H1 (cell line): ENCODE measurements at regions of chr9 and their contacts with region 1.

Region 1: DNA sequence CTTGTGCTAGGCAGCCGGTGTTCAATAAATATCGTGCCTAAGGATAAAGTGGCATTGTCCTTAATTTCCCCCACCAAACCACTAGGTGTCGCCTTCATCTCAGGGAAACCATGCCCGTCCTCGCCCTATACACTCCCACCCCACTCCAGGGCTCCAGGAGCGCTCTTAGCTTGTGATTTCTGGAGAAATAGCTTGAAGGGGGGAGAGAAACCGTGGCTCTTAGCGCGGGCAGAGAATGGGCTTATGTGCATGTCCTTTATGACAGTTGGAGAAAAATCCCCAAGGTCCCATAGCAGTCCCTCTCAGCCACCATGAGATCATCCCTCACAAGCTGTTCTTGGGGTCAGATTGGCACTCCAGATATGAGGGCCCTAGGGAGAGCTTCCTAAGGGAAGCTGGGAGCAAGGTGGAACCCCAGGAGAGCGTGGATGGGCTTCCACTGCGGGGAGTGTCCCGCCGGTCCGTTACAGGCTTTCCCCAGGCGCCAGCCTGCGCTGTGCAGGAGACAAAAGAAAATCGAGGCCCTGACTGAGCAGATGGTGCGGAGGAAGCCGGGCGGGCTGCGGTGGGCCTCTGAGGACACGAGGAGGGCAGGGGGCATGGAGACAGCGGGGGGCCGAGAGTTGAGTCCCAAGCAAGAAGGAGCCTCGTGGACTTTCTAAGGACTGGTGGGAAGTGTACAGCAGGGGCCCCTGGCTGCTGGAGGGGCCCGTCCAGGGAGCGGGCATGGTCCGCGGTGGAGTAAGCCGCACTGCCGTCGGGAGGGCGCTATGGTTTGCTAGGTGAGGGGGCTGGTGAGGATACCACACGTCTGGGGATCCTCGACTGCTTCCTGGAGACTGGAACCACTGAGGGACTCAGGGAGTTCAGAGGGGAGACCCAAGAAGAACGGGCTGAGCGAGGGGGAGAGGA is 750 bp upstream of the NPR2 start:
- DNase-seq: peak in 1 of 2 experiments; percentile 78
- H3K4me3 ChIP-seq: peak overlapping the region; percentile 39 to 65 (median 52); a peak in 7 of 8 replicates
- H3K27ac ChIP-seq: no peak overlapping the region
- H3K4me1 ChIP-seq: peaks cover 5 to 13% (median 7%) of the 10 kb centered on the region in 4 experiments; a peak in 6 of 7 replicates
- H3K27me3 ChIP-seq: peaks cover 0 to 10% (median 0%) of the 10 kb centered on the region in 4 experiments; a peak in 4 of 7 replicates
- CTCF ChIP-seq: peak; percentile 79 to 92 (median 90)
- EP300 ChIP-seq: no peak
- POLR2A ChIP-seq: no peak
- RAD21 ChIP-seq: peak; percentile 94

Region 2: GRCh38 chr9:35756275-35757225 is 34.1 kb before region 1 on chr9:
- CTCF ChIA-PET with region 1: interaction called, 10 read pairs
- POLR2A ChIA-PET with region 1: interaction called, 3 read pairs
- DNase-seq: peak; percentile 38 to 87
- H3K4me3 ChIP-seq: peak overlapping the region; percentile 85 to 92 (median 90)
- H3K27ac ChIP-seq: peak overlapping the region; percentile 81
- H3K4me1 ChIP-seq: peaks cover 0 to 5% (median 0%) of the 10 kb centered on the region in 4 experiments; a peak in 2 of 7 replicates
- H3K27me3 ChIP-seq: no peaks in the 10 kb centered on the region
- CTCF ChIP-seq: peak; percentile 56 to 79 (median 75)
- EP300 ChIP-seq: peak in 1 of 2 experiments; percentile 17; a peak in 1 of 3 replicates
- POLR2A ChIP-seq: peak in 1 of 2 experiments; percentile 71; a peak in 1 of 3 replicates
- RAD21 ChIP-seq: peak; percentile 28 to 42

Region 3: GRCh38 chr9:35774907-35775635 is 15.6 kb before region 1 on chr9:
- CTCF ChIA-PET with region 1: interaction called, 29 read pairs
- POLR2A ChIA-PET with region 1: interaction called, 4 read pairs
- DNase-seq: peak in 1 of 2 experiments; percentile 52
- H3K4me3 ChIP-seq: no peak overlapping the region
- H3K27ac ChIP-seq: no peak overlapping the region
- H3K4me1 ChIP-seq: peaks cover 0 to 6% (median 4%) of the 10 kb centered on the region in 4 experiments; a peak in 6 of 7 replicates
- H3K27me3 ChIP-seq: no peaks in the 10 kb centered on the region
- CTCF ChIP-seq: no peak
- EP300 ChIP-seq: no peak
- POLR2A ChIP-seq: no peak
- RAD21 ChIP-seq: no peak

Region 4: GRCh38 chr9:35805551-35805950 is 14.9 kb after region 1 on chr9:
- CTCF ChIA-PET with region 1: interaction called, 67 read pairs
- POLR2A ChIA-PET with region 1: interaction called, 38 read pairs
- DNase-seq: no peak
- H3K4me3 ChIP-seq: no peak overlapping the region
- H3K27ac ChIP-seq: no peak overlapping the region
- H3K4me1 ChIP-seq: no peaks in the 10 kb centered on the region
- H3K27me3 ChIP-seq: no peaks in the 10 kb centered on the region
- CTCF ChIP-seq: no peak
- EP300 ChIP-seq: no peak
- POLR2A ChIP-seq: no peak
- RAD21 ChIP-seq: no peak

Region 5: GRCh38 chr9:35814841-35815543 is 24.4 kb after region 1 on chr9 and contains the start of gene HINT2:
- CTCF ChIA-PET with region 1: interaction called, 67 read pairs
- POLR2A ChIA-PET with region 1: interaction called, 38 read pairs
- DNase-seq: peak; percentile 93 to 96
- H3K4me3 ChIP-seq: peak within 1 kb of the TSS; percentile 72 to 98 (median 80)
- H3K27ac ChIP-seq: peak within 1 kb of the TSS; percentile 85
- H3K4me1 ChIP-seq: peaks cover 0 to 7% (median 4%) of the 10 kb centered on the region in 4 experiments; a peak in 6 of 7 replicates
- H3K27me3 ChIP-seq: peaks cover 0 to 3% (median 2%) of the 10 kb centered on the region in 4 experiments; a peak in 1 of 7 replicates
- CTCF ChIP-seq: no peak
- EP300 ChIP-seq: no peak
- POLR2A ChIP-seq: peak; percentile 7 to 79; a peak in 2 of 3 replicates
- RAD21 ChIP-seq: no peak
- total RNA-seq, gene HINT2: 32.1 and 34.8 TPM in 2 replicates

Region 6: DNA sequence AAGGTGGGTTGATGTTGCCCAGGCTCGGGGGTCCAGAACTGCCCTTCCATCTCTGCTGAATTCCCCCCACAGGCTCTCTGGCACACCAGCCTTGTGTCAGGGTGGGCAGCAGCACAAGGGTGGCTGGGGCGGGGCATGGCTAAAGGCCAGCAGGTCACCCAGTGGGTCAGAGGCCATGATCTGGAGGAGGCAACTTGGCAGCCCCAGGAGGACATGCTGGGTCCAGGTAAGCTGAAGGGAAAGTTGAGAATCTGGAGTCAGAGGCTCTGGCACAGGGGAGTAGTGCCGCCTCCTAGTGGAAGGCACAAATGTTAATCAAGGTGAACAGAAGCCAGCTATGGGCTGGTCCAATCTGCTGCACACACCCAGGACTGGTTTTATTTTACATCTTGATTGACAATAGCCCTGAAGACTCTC is 44.6 kb after region 1 on chr9:
- CTCF ChIA-PET with region 1: interaction called, 45 read pairs
- POLR2A ChIA-PET with region 1: interaction called, 3 read pairs
- DNase-seq: no peak
- H3K4me3 ChIP-seq: no peak overlapping the region
- H3K27ac ChIP-seq: no peak overlapping the region
- H3K4me1 ChIP-seq: no peaks in the 10 kb centered on the region; a peak in 2 of 7 replicates
- H3K27me3 ChIP-seq: no peaks in the 10 kb centered on the region; a peak in 1 of 7 replicates
- CTCF ChIP-seq: peak; percentile 55 to 82 (median 72)
- EP300 ChIP-seq: no peak
- POLR2A ChIP-seq: no peak
- RAD21 ChIP-seq: peak; percentile 50 to 66

Region 7: DNA sequence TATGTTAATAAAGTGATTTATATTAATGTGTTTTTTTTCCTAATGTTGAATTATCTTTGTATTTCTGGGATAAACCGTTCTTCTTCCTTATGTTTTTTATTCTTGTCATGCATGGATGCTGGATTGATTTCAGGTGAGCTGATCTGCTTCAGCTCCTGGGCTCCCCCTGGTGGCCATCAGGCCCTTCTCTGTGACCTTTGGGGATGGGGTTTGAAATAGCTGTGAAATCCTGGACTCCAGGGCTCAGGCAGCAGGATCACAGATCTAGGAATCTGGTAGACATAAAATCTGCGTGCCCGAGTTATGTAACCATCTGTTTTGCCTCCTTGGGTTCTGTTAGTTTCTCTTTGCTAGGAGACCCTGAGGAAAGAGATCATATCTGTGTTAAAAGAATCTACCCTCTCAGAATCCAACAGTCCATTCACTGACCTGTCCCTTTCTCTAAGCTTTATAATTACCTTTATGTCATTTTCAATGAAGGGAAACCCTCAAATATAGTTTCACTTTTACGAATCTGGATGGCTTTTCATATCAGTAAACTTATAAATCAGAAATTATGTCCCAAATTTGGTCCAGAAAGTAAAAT is 91.7 kb after region 1 on chr9:
- CTCF ChIA-PET with region 1: interaction called, 43 read pairs
- POLR2A ChIA-PET with region 1: interaction called, 4 read pairs
- DNase-seq: peak; percentile 46 to 91
- H3K4me3 ChIP-seq: no peak overlapping the region
- H3K27ac ChIP-seq: no peak overlapping the region
- H3K4me1 ChIP-seq: no peaks in the 10 kb centered on the region; a peak in 2 of 7 replicates
- H3K27me3 ChIP-seq: no peaks in the 10 kb centered on the region
- CTCF ChIP-seq: peak; percentile 92 to 96 (median 95)
- EP300 ChIP-seq: no peak
- POLR2A ChIP-seq: no peak
- RAD21 ChIP-seq: peak; percentile 83 to 91

Region 8: DNA sequence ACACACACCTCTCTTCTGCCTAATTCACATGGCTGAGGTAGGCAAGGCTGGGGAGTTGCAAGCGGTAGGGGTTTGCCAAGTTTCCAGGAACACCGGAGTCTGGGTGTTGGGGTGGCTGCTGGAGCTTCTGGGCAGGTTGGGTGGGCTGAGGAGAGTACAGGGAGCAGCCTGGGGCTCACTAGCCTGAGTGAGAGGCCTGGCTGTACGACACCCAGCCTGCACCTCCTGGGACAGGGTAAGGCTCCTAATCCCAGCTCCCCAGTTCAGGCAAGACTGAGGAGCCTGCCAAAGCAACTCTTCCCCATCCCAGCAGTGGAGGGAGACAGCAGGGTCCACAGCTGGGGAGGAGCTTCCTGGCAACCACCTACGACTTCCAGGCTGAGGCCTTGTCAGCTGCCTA is 126.6 kb after region 1 on chr9:
- CTCF ChIA-PET with region 1: no interaction called
- POLR2A ChIA-PET with region 1: no interaction called
- DNase-seq: no peak
- H3K4me3 ChIP-seq: no peak overlapping the region
- H3K27ac ChIP-seq: no peak overlapping the region
- H3K4me1 ChIP-seq: peaks cover 0 to 4% (median 0%) of the 10 kb centered on the region in 4 experiments; a peak in 3 of 7 replicates
- H3K27me3 ChIP-seq: no peaks in the 10 kb centered on the region
- CTCF ChIP-seq: no peak
- EP300 ChIP-seq: no peak
- POLR2A ChIP-seq: no peak
- RAD21 ChIP-seq: no peak

Region 9: GRCh38 chr9:35972093-35972492 is 181.5 kb after region 1 on chr9:
- CTCF ChIA-PET with region 1: no interaction called
- POLR2A ChIA-PET with region 1: no interaction called
- DNase-seq: peak in 1 of 2 experiments; percentile 75
- H3K4me3 ChIP-seq: peak overlapping the region; percentile 1 to 53 (median 7); a peak in 6 of 8 replicates
- H3K27ac ChIP-seq: no peak overlapping the region
- H3K4me1 ChIP-seq: no peaks in the 10 kb centered on the region
- H3K27me3 ChIP-seq: peaks cover 0 to 2% (median under 1%) of the 10 kb centered on the region in 4 experiments; a peak in 3 of 7 replicates
- CTCF ChIP-seq: no peak; a peak in 1 of 4 replicates
- EP300 ChIP-seq: no peak
- POLR2A ChIP-seq: no peak
- RAD21 ChIP-seq: no peak